PC-3 (cell line): ENCODE measurements at regions of chr10 and their contacts with region 1.

Region 1: DNA sequence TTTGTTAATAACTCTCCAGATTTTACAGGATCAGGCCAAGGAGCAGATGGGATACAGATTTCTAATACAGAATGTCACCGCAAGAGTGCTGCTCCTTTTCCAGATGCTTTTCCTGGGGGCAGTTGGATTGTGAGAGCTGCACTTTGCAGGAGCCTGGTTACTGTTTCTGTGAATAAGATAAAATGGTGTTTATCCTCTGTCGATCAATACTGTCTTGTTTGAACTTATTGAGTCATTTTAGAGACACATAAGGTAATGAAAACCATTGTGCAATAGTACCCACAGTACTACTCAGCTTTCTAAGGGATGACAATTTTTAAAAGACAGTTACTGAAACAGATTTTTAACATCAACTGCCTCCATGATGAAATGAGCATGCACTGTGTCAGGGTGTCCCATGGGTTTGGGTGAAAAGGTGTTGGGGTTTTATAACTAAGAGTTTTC is 2.9 kb downstream of the A1CF start:
- DNase-seq: peak; percentile 86
- ATAC-seq: peak; percentile 90
- H3K4me3 ChIP-seq: no peak overlapping the region
- H3K27ac ChIP-seq: no peak overlapping the region
- H3K4me1 ChIP-seq: peaks cover 10% of the 10 kb centered on the region
- H3K27me3 ChIP-seq: peaks cover 77% of the 10 kb centered on the region
- CTCF ChIP-seq: no peak

Region 2: GRCh38 chr10:50866317-50866716 is 16.2 kb before region 1 on chr10:
- CTCF ChIA-PET with region 1: no interaction called
- POLR2A ChIA-PET with region 1: no interaction called
- intact Hi-C with region 1: loop called (anchors 2 kb)
- DNase-seq: no peak
- ATAC-seq: no peak
- H3K4me3 ChIP-seq: no peak overlapping the region
- H3K27ac ChIP-seq: no peak overlapping the region
- H3K4me1 ChIP-seq: no peaks in the 10 kb centered on the region
- H3K27me3 ChIP-seq: peaks cover 74% of the 10 kb centered on the region
- CTCF ChIP-seq: no peak